CD4-positive, alpha-beta memory T cell (primary cell): ENCODE measurements at regions of chr4 and their contacts with region 1.

Region 1: DNA sequence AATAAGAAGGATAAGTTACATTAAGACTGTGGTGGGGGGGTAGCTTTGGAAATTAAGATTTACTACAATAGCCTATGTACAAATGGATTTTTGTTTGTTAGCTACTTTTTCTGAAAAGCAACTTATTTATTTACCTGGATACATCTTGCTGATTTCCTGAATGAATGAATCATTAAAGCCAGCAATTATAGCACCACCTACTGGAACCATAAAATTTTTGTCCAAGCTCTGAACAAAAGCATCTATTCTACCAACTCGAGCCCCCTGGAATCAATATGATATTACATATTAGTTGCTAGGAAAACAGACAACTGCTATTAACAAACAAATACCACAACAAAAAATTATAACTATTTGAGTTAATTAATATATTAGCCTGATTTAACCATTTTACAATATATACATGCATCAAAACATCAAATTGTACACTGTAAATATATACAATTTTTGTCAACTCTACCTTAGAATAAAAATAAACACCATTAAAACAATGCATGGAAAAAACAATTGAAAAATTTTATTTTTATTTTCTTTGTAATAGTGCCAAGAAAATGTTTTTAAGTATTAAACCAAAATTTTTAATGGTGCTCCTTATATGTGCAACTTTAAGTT is 15.3 kb downstream of the SEPSECS start:
- DNase-seq: peak in 1 of 5 donors; percentile 7
- H3K4me3 ChIP-seq: no peak overlapping the region
- H3K4me3 Mint-ChIP-seq: no peak overlapping the region
- H3K27ac ChIP-seq: no peak overlapping the region
- H3K27ac Mint-ChIP-seq: no peak overlapping the region
- H3K4me1 ChIP-seq: no peaks in the 10 kb centered on the region
- H3K4me1 Mint-ChIP-seq: peaks cover 0 to 1% (median 0%) of the 10 kb centered on the region in 4 donors
- H3K27me3 ChIP-seq: no peaks in the 10 kb centered on the region
- H3K27me3 Mint-ChIP-seq: no peaks in the 10 kb centered on the region

Region 2: GRCh38 chr4:24488399-24489164 is 656.4 kb before region 1 on chr4:
- CTCF ChIA-PET with region 1: no interaction called
- POLR2A ChIA-PET with region 1: no interaction called
- intact Hi-C with region 1: loop called (anchors 10 kb)
- DNase-seq: peak in 3 of 5 donors; percentile 18 to 29 (median 28)
- H3K4me3 ChIP-seq: no peak overlapping the region
- H3K4me3 Mint-ChIP-seq: peak overlapping the region in 1 of 8 donors; percentile 16
- H3K27ac ChIP-seq: no peak overlapping the region
- H3K27ac Mint-ChIP-seq: no peak overlapping the region
- H3K4me1 ChIP-seq: no peaks in the 10 kb centered on the region
- H3K4me1 Mint-ChIP-seq: peaks cover 2 to 6% (median 4%) of the 10 kb centered on the region in 4 donors
- H3K27me3 ChIP-seq: no peaks in the 10 kb centered on the region
- H3K27me3 Mint-ChIP-seq: peaks cover 11 to 15% of the 10 kb centered on the region in 2 donors

Region 3: GRCh38 chr4:25131926-25132325 is 13.1 kb before region 1 on chr4:
- CTCF ChIA-PET with region 1: interaction called, 28 read pairs
- POLR2A ChIA-PET with region 1: no interaction called
- intact Hi-C with region 1: no loop called
- DNase-seq: no peak
- H3K4me3 ChIP-seq: no peak overlapping the region
- H3K4me3 Mint-ChIP-seq: no peak overlapping the region
- H3K27ac ChIP-seq: no peak overlapping the region
- H3K27ac Mint-ChIP-seq: no peak overlapping the region
- H3K4me1 ChIP-seq: no peaks in the 10 kb centered on the region
- H3K4me1 Mint-ChIP-seq: peaks cover 2 to 18% (median 11%) of the 10 kb centered on the region in 4 donors
- H3K27me3 ChIP-seq: no peaks in the 10 kb centered on the region
- H3K27me3 Mint-ChIP-seq: no peaks in the 10 kb centered on the region